ENCODE measurements at regions of chr1 and their contacts with region 1.

Region 1: DNA sequence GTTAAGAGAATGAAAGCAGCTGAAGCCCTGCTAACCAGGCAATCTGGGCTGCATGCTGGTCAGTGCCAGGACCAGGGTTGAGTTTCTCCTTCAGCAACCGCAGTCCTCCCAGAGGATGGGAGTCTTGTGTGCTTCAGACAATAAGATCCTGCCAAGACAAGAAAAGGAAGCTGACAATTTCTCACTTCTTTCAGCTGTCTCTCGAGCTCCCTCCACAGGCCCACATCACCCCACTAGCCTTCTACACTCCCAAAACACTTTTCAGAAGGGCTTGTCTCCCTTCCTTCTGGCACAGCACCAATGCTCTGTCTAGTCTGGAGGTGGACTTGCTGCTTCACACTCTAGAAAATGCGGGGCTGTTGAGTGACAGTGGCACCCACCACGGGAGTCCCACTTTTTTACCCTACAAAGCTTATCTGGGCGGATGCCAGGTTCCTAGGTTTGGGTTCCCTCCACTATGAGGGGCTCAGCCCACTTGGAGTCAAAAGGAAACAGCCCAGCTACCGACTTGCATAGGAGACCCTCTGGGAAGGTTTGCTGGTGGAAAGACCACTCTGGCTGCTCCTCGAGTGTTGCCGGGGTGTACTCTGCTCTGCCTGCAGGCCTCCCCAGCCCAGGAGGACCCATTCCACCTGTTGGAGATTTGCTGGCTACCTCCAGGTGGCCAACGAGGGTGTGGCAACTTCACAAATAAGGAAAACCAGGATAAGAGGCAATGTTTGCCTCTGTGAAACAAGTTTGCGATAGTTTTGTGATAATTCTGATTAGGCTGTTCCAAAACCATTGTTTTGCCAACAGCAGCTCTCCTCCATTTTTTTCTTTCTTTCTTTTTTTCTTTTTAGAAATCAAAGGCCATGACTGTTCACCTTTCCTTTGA is 68.9 kb downstream of the TENT5C start:
- DNase-seq: peak; percentile 75
- CTCF ChIP-seq: peak; percentile 74

Region 2: DNA sequence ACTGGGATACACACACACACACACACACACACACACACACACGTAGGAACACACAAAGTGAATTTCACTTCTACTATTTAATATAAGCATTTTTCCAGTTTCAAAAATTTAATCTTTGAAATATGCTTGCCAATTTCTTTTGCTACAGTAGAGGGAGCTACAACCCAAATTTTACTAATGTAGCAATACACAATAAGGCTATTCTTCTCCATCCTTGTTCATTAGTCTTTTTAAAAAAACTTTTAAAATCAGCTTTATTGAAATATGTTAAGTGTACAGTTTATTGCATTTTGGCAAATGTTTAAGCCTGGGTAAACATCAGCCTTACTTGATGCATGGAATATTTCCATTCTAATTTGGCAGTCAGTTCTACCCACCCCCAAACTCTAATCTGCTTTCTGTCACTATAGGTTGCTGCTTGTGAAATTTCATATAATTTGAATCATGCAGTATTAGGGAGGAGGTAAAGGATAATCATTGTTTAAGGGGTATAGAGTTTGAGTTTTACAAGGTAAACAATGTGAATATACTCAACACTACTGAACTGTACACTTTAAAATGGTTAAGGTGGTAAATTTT is 161.9 kb before region 1 on chr1:
- CTCF ChIA-PET with region 1: interaction called, 19 read pairs
- POLR2A ChIA-PET with region 1: interaction called, 7 read pairs
- DNase-seq: no peak
- CTCF ChIP-seq: peak; percentile 51

Region 3: DNA sequence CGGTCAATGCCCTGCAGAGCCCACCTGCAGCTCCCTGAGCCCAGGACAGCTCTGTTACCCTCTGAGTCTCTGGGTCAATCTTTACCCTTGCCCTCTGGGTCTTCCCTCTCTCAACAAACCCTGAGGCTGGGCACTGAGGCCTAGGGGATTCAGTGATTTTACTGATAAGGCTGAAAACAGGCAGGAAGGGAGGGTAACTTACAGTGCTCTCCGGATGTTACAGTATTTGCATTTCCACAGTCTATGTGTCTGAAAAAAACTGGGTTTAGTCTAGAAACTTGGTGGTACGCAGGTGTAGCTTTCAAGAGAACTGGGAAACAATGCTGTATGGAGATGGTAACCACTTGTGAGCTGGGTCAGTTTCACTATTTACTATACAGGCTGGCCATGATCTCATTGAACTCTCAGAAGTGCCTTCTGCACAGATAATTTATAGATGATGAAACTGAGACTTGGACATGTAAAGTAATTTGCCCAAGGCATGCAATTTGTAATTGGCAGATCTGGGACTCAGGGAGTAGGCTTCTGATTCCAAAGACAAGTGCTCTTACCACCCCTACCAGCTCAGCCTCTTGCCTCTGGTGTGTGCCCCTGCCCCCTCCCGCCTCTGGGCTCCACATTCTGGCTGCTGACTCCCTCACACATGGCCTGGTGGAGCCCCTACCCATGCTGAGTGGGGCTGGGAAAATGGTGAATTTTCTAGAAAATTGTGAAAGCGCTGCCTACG is 20.1 kb before region 1 on chr1:
- CTCF ChIA-PET with region 1: interaction called, 31 read pairs
- POLR2A ChIA-PET with region 1: no interaction called
- DNase-seq: peak; percentile 78
- CTCF ChIP-seq: no peak

Region 4: GRCh38 chr1:117664314-117664713 is 10.4 kb before region 1 on chr1:
- CTCF ChIA-PET with region 1: interaction called, 31 read pairs
- POLR2A ChIA-PET with region 1: no interaction called
- DNase-seq: peak; percentile 86
- CTCF ChIP-seq: no peak

Measured in GM10248 (cell line).